Head of caudate nucleus (tissue), 42 donors: ENCODE measurements at regions of chr13 and their contacts with region 1.

Region 1: DNA sequence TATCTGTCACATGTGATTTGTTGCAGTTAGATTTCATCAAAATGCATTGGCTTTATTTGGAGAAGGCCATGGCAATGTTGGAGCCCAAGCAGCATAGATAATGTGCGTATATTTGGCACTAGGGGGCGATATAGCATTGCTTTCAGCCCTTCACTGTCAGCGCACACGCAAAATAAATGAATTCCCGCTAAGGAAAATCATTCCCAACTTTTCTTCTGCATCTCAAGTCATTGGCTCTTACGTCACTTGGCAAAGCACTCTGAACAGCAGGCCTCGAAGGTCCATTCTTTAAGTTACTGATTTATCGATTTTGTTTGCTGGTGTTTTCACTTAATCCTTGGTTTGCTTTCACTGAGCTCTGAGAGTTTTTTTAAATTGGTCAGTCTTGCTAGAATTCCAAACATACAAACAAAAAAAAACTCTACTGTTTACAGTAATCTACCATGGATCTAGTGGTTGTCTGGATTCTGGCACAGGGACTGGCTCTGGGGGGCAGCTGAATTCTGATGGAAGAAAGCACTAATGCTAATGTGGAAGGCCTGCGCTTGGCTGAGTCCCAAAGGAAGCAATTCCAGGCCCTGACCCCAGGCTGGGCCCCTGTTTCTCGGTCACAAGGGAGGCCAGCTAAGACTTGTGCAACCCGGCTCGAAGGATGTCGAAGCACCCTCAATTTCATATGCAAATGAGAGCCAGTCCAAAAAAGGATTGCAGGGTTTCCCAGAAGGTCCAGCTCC is 97.7 kb upstream of the IPO5 start:
- DNase-seq: peak in 39 of 42 donors; percentile 7 to 83 (median 51)

Region 2: DNA sequence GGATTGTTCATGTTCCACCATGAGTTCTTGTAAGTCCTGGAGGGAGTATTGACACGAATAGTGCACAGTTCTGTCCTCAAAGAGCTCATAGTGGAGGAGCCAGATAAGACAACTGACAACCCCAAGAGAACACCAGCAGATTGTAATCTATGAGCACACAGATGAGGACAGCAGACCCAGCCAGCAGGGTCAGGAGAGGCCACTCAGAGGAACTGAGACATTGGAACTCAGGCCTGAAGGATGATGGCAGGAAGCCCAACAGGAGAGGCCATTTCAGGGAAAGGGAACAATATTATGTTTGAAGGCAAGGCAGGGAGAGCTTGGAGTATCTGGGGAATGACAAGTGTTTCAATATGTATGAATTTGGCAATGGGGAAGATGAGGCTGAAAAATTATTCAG is 34.1 kb after region 1 on chr13:
- intact Hi-C with region 1: no loop called
- DNase-seq: no peak

Region 3: GRCh38 chr13:98672944-98673545 is 817.3 kb after region 1 on chr13:
- intact Hi-C with region 1: loop called (anchors 10 kb)
- DNase-seq: peak in 41 of 42 donors; percentile 12 to 83 (median 55)